Activated T-helper 1 cell treated with anti-CD3 and anti-CD28 coated beads, Interleukin-12 subunit alpha, Interleukin-12 subunit beta, Interleukin-2, Interleukin-4 antibody, amounts not matched to agents 30 ng/mL and 10 ng/mL and 1 ng/mL, durations not matched to agents 14 hours and 24 hours and 36 hours (primary cell): ENCODE measurements at regions of chr19 and their contacts with region 1.

Region 1: GRCh38 chr19:47075179-47075810 is 26.9 kb upstream of the TMEM160 start:
- DNase-seq: no peak
- H3K4me3 Mint-ChIP-seq: no peak overlapping the region
- H3K27ac Mint-ChIP-seq: peak overlapping the region; percentile 5
- H3K4me1 Mint-ChIP-seq: peaks cover 16% of the 10 kb centered on the region
- H3K27me3 Mint-ChIP-seq: no peaks in the 10 kb centered on the region

Region 2: GRCh38 chr19:47019431-47020041 is 55.8 kb before region 1 on chr19 and contains the start of gene NPAS1:
- intact Hi-C with region 1: no loop called
- DNase-seq: no peak
- H3K4me3 Mint-ChIP-seq: no peak within 1 kb of the TSS
- H3K27ac Mint-ChIP-seq: no peak within 1 kb of the TSS
- H3K4me1 Mint-ChIP-seq: peaks cover 6% of the 10 kb centered on the region
- H3K27me3 Mint-ChIP-seq: peaks cover 56% of the 10 kb centered on the region
- total RNA-seq, gene NPAS1: 0.39 and 0.49 TPM in 2 replicates

Region 3: DNA sequence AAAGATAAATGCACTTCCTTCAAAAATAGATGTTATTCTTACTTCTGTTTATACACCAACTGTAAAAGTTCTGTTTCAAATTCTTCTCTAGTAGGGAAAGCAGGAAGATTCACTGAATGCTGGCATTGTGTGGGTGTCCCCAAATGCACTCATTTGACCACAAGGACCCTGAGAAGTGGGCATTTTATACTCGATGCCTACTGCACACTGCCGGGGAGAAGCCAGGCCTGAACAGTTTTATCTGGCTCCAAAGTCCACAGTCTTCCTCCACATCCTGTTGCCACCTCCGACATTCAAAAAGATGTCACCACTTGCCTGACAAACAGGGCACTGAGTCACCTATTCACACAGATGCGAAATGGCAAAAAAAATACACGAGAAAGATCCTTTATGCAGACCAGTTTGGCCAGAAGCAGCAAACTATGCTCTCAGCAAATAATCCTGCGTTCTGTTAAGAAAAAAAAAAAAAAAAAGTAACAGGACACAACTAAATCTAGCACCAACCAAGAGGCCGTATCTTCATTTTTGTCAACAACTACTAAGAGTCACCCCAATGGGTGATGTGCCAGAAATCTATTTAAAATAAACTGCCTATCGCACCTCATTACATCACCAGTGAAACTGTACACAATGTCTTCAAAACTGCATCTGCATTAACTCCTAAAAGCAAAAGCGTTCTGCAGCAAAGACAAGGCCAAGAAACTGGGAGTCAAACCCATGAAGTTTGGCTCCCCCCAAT is 32.1 kb after region 1 on chr19:
- intact Hi-C with region 1: loop called (anchors 1 kb)
- DNase-seq: peak; percentile 52
- H3K4me3 Mint-ChIP-seq: peak overlapping the region; percentile 92
- H3K27ac Mint-ChIP-seq: peak overlapping the region; percentile 99
- H3K4me1 Mint-ChIP-seq: peaks cover 65% of the 10 kb centered on the region
- H3K27me3 Mint-ChIP-seq: no peaks in the 10 kb centered on the region